K562 (cell line): ENCODE measurements at regions of chr16 and their contacts with region 1.

Region 1: GRCh38 chr16:29815793-29816693 is at the start of gene PAGR1:
- DNase-seq: peak; percentile 91 to 99 (median 93)
- ATAC-seq: peak; percentile 81
- H3K4me3 ChIP-seq: peak within 1 kb of the TSS; percentile 68
- H3K27ac ChIP-seq: peak within 1 kb of the TSS; percentile 71
- H3K4me1 ChIP-seq: peaks cover 28 to 73% of the 10 kb centered on the region in 2 experiments
- H3K27me3 ChIP-seq: no peaks in the 10 kb centered on the region
- CTCF ChIP-seq: peak; percentile 87 to 93 (median 90)
- EP300 ChIP-seq: no peak
- POLR2A ChIP-seq: peak; percentile 89
- RAD21 ChIP-seq: peak; percentile 78 to 79
- polyA plus RNA-seq, gene PAGR1: 1.4 to 4.5 TPM

Region 2: DNA sequence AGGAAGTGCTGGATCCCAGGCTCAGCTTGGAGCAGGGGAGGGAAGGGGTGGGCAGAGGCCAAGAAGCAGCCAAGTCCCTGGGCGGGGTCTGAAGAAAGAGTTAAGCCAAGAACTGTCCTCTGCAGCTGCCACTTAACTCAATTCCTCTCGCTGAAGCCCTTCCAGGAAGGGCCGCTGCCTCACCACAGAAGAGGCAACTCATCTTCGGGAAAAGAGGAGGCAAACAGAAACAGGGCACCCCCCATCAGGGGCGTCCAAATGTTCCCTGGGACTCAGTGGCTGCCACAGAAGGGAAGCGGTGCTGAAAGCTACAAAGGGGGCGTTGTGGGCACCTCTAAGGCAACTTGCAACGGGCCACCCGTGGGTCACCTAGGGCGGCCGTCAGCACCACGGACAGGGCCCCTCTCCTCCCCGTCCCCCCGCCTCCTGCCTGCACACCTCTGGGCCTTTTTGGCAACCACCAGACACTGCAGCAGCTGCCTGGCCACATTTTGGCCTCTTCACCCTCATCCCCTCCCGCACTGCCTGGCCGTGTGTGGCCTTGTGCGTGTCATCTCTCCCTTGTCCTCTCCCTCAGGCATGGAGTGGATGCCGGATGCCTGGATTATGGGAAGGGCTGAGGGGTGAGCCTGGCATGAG is 212.5 kb after region 1 on chr16:
- CTCF ChIA-PET with region 1: no interaction called
- POLR2A ChIA-PET with region 1: no interaction called
- in situ Hi-C with region 1: no loop called
- intact Hi-C with region 1: loop called (anchors 10 kb)
- DNase-seq: peak; percentile 55 to 82 (median 68)
- ATAC-seq: peak; percentile 82
- H3K4me3 ChIP-seq: no peak overlapping the region
- H3K27ac ChIP-seq: no peak overlapping the region
- H3K4me1 ChIP-seq: peaks cover 0 to 31% of the 10 kb centered on the region in 2 experiments; a peak in 2 of 5 replicates
- H3K27me3 ChIP-seq: peaks cover 17 to 72% of the 10 kb centered on the region in 2 experiments; a peak in 4 of 5 replicates
- CTCF ChIP-seq: no peak
- EP300 ChIP-seq: no peak
- POLR2A ChIP-seq: no peak
- RAD21 ChIP-seq: no peak

Region 3: DNA sequence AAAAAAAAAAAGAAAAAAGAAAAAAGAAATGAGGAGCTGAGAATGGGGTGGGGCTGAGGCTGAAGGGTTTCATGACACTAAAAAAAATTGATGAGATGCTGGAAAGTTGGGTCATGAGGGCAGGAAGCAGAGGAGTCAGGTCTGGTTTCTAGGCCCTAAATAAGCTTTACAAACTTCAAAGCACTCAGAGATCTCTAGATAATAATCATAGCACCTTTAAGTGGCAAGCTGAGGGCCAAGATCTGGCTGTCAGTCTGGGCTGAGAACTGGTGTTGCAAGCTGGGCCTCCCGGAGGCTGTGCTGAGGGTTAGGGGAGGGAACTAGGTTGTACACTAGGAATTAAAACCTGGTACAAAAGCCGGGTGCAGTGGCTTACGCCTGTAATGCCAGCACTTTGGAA is 735.7 kb after region 1 on chr16:
- CTCF ChIA-PET with region 1: no interaction called
- POLR2A ChIA-PET with region 1: no interaction called
- in situ Hi-C with region 1: no loop called
- intact Hi-C with region 1: no loop called
- DNase-seq: no peak
- ATAC-seq: no peak
- H3K4me3 ChIP-seq: no peak overlapping the region
- H3K27ac ChIP-seq: no peak overlapping the region
- H3K4me1 ChIP-seq: peaks cover 26 to 38% of the 10 kb centered on the region in 2 experiments; a peak in 4 of 5 replicates
- H3K27me3 ChIP-seq: no peaks in the 10 kb centered on the region
- CTCF ChIP-seq: no peak
- EP300 ChIP-seq: no peak
- POLR2A ChIP-seq: no peak
- RAD21 ChIP-seq: no peak